ENCODE measurements at regions of chr11 and their contacts with region 1.

Region 1: GRCh38 chr11:19679952-19680828 is 32.4 kb upstream of the NAV2 start:
- DNase-seq: peak; percentile 94 to 96 (median 95)
- ATAC-seq: peak; percentile 84 to 90
- H3K4me3 ChIP-seq: no peak overlapping the region
- H3K27ac ChIP-seq: peak overlapping the region; percentile 73
- H3K4me1 ChIP-seq: peaks cover 38% of the 10 kb centered on the region
- H3K27me3 ChIP-seq: no peaks in the 10 kb centered on the region

Region 2: GRCh38 chr11:19553683-19554333 is 126.4 kb before region 1 on chr11:
- intact Hi-C with region 1: no loop called
- DNase-seq: peak; percentile 83 to 93 (median 90)
- ATAC-seq: peak; percentile 73 to 79
- H3K4me3 ChIP-seq: no peak overlapping the region
- H3K27ac ChIP-seq: no peak overlapping the region
- H3K4me1 ChIP-seq: no peaks in the 10 kb centered on the region
- H3K27me3 ChIP-seq: no peaks in the 10 kb centered on the region

Region 3: GRCh38 chr11:19577976-19578619 is 102.1 kb before region 1 on chr11:
- intact Hi-C with region 1: loop called in 1 of 4 experiments (anchors 5 kb)
- DNase-seq: peak; percentile 43 to 77 (median 74)
- ATAC-seq: peak; percentile 74
- H3K4me3 ChIP-seq: no peak overlapping the region
- H3K27ac ChIP-seq: peak overlapping the region; percentile 83
- H3K4me1 ChIP-seq: peaks cover 19% of the 10 kb centered on the region
- H3K27me3 ChIP-seq: no peaks in the 10 kb centered on the region

Region 4: DNA sequence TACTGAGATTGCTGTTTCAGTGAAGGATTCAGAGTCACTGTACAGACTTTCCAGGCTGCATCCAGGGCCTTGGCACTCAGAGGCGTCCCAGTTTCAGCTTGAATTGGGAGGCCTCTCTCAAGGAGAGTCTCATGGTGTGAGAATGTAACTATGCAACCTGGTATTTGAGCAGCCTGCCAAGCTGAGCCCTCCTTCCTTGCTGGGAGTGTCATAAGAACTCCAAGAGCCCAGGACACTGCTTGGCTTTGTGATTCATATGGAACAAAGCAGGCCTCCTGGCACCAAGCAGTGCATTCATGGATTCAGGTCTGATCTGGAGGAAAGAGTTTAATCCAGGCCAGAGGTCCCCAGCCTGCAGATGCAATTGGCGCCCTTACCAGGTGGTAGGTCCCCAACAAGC is 308.4 kb after region 1 on chr11:
- intact Hi-C with region 1: no loop called
- DNase-seq: peak in 2 of 3 donors; percentile 54 to 61
- ATAC-seq: peak; percentile 82 to 84
- H3K4me3 ChIP-seq: no peak overlapping the region
- H3K27ac ChIP-seq: peak overlapping the region; percentile 47
- H3K4me1 ChIP-seq: peaks cover 3% of the 10 kb centered on the region
- H3K27me3 ChIP-seq: no peaks in the 10 kb centered on the region